H1 (cell line): ENCODE measurements at regions of chr1 and their contacts with region 1.

Region 1: DNA sequence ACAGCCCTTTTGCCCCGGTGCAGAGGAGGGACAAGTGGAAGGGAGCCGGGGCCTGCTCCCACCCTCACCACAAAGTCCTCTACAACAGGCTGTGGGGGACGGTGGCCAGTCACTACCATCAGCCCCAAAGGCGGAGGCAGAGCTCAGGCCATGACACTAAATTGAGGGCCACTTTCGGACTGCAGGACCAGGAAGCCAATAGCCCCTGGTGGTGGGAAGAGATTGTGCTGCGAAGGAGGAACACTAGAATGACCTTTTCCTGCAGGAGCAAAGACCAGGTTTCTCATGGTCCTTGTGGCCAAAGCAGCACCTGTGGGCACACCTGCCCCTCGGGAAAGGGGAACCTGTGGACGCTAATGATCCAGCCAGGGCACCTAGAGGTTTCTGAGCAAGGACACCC is 30.3 kb downstream of the ACTA1 start:
- DNase-seq: no peak
- H3K4me3 ChIP-seq: no peak overlapping the region
- H3K27ac ChIP-seq: no peak overlapping the region
- H3K4me1 ChIP-seq: peaks cover 3 to 17% (median 12%) of the 10 kb centered on the region in 4 experiments
- H3K27me3 ChIP-seq: peaks cover 13 to 25% (median 22%) of the 10 kb centered on the region in 4 experiments
- CTCF ChIP-seq: peak in 2 of 3 experiments; percentile 35 to 42; a peak in 2 of 4 replicates
- EP300 ChIP-seq: no peak
- POLR2A ChIP-seq: no peak
- RAD21 ChIP-seq: no peak; a peak in 1 of 4 replicates

Region 2: GRCh38 chr1:229296541-229296941 is 107.0 kb before region 1 on chr1:
- CTCF ChIA-PET with region 1: no interaction called
- POLR2A ChIA-PET with region 1: no interaction called
- DNase-seq: no peak
- H3K4me3 ChIP-seq: no peak overlapping the region
- H3K27ac ChIP-seq: no peak overlapping the region
- H3K4me1 ChIP-seq: no peaks in the 10 kb centered on the region; a peak in 2 of 7 replicates
- H3K27me3 ChIP-seq: no peaks in the 10 kb centered on the region
- CTCF ChIP-seq: no peak
- EP300 ChIP-seq: no peak
- POLR2A ChIP-seq: no peak
- RAD21 ChIP-seq: no peak

Region 3: GRCh38 chr1:229347528-229347927 is 56.0 kb before region 1 on chr1:
- CTCF ChIA-PET with region 1: interaction called, 14 read pairs
- POLR2A ChIA-PET with region 1: interaction called, 11 read pairs
- DNase-seq: no peak
- H3K4me3 ChIP-seq: no peak overlapping the region
- H3K27ac ChIP-seq: no peak overlapping the region
- H3K4me1 ChIP-seq: peaks cover 0 to 3% (median 0%) of the 10 kb centered on the region in 4 experiments; a peak in 2 of 7 replicates
- H3K27me3 ChIP-seq: peaks cover 2 to 13% (median 9%) of the 10 kb centered on the region in 4 experiments; a peak in 5 of 7 replicates
- CTCF ChIP-seq: no peak
- EP300 ChIP-seq: no peak
- POLR2A ChIP-seq: no peak
- RAD21 ChIP-seq: no peak

Region 4: GRCh38 chr1:229378586-229379367 is 24.8 kb before region 1 on chr1:
- CTCF ChIA-PET with region 1: interaction called, 12 read pairs
- POLR2A ChIA-PET with region 1: interaction called, 3 read pairs
- DNase-seq: no peak
- H3K4me3 ChIP-seq: peak overlapping the region in 1 of 4 experiments; percentile 20; a peak in 2 of 8 replicates
- H3K27ac ChIP-seq: no peak overlapping the region
- H3K4me1 ChIP-seq: peaks cover 17 to 30% (median 20%) of the 10 kb centered on the region in 4 experiments
- H3K27me3 ChIP-seq: peaks cover 0 to 2% (median under 1%) of the 10 kb centered on the region in 4 experiments; a peak in 2 of 7 replicates
- CTCF ChIP-seq: peak in 1 of 3 experiments; percentile 39; a peak in 1 of 4 replicates
- EP300 ChIP-seq: no peak
- POLR2A ChIP-seq: no peak
- RAD21 ChIP-seq: peak; percentile 21 to 26; a peak in 3 of 4 replicates